ENCODE measurements at regions of chr7 and their contacts with region 1.

Region 1: DNA sequence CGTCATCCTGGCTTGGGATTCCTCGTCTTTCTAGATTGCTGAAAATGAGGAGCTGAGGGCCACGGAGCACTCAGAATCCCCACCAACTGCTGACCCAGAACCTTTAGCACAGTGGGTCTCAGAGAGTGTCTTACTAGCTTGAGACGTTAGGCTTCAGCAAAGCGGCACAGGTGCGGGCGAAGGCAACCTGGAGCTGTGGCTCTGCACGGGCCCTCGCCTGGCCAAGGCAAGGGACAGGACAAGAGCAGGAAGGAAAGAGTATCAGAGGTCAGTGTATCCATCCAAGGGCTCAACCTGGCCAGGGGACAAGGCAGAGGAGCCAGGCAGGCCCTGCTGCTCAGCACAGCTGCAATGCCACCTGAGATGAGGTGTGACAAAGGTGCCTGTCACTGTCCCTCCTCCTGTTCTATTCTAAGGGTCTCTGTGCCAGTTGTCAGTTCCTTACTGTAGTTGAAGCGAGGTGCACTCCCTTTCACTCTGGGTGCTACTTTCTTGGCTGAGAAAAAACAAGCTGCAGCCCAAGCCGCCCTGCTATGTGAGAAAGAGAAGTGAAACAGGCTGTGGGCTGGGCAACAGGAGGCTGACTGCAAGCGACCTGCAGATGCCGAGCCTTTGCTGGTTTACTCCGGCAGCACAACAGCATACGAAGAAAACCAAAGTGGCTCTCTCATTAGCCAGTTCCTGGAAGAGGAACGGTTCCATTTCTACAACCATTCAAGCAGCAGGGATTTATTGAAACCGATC is 33.3 kb upstream of the KDM7A start:
- DNase-seq: peak; percentile 72
- H3K4me3 Mint-ChIP-seq: peak overlapping the region; percentile 39
- H3K27ac Mint-ChIP-seq: peak overlapping the region; percentile 93
- H3K4me1 Mint-ChIP-seq: peaks cover 79% of the 10 kb centered on the region
- H3K27me3 Mint-ChIP-seq: no peaks in the 10 kb centered on the region

Region 2: GRCh38 chr7:139159900-139160675 is 1050.0 kb before region 1 on chr7:
- CTCF ChIA-PET with region 1: no interaction called
- POLR2A ChIA-PET with region 1: no interaction called
- DNase-seq: no peak
- H3K4me3 Mint-ChIP-seq: no peak overlapping the region
- H3K27ac Mint-ChIP-seq: no peak overlapping the region
- H3K4me1 Mint-ChIP-seq: no peaks in the 10 kb centered on the region
- H3K27me3 Mint-ChIP-seq: peaks cover 2% of the 10 kb centered on the region

Region 3: DNA sequence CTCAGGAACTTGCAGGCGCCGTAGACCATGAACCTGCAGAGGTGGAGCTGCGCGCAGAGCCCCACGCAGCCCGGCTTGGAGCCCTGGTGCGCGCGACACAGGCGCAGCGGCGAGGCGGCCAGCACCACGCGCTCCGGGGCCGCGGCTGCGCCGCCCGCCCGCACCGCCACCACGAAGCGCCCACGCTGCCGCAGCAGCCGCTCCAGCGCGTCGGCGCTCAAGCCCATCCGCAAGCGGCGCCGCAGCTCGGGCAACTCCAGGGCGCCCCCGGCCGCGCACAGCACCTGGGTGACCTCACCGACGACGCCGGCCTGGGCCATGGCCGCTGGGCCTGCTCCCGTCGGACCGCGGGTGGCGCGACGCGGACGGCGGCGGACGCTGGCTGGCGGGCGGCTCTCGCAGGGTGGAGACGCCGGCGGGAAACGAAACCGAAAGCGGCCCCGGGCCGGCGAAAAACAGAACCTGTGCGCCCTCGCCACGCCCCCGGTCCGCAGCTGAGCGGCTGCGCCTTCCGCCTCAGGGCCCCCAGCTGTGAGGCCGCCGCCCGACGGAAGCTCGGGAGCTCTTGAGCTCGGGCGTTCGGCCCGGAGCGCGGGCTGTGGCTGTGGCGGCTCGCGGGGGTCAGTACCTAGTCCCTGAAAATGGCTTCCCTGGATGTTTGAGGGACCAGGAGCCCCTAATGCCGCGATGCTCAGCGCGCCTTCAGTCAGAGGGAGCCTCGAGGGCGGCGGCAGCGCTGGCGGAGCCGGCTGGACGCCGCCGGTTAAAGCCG is 147.3 kb before region 1 on chr7 and contains the start of gene PARP12:
- CTCF ChIA-PET with region 1: no interaction called
- POLR2A ChIA-PET with region 1: no interaction called
- DNase-seq: peak; percentile 92
- H3K4me3 Mint-ChIP-seq: peak within 1 kb of the TSS; percentile 90
- H3K27ac Mint-ChIP-seq: peak within 1 kb of the TSS; percentile 92
- H3K4me1 Mint-ChIP-seq: peaks cover 48% of the 10 kb centered on the region
- H3K27me3 Mint-ChIP-seq: peaks cover 7% of the 10 kb centered on the region
- total RNA-seq, gene PARP12: 121 to 129 TPM

Region 4: DNA sequence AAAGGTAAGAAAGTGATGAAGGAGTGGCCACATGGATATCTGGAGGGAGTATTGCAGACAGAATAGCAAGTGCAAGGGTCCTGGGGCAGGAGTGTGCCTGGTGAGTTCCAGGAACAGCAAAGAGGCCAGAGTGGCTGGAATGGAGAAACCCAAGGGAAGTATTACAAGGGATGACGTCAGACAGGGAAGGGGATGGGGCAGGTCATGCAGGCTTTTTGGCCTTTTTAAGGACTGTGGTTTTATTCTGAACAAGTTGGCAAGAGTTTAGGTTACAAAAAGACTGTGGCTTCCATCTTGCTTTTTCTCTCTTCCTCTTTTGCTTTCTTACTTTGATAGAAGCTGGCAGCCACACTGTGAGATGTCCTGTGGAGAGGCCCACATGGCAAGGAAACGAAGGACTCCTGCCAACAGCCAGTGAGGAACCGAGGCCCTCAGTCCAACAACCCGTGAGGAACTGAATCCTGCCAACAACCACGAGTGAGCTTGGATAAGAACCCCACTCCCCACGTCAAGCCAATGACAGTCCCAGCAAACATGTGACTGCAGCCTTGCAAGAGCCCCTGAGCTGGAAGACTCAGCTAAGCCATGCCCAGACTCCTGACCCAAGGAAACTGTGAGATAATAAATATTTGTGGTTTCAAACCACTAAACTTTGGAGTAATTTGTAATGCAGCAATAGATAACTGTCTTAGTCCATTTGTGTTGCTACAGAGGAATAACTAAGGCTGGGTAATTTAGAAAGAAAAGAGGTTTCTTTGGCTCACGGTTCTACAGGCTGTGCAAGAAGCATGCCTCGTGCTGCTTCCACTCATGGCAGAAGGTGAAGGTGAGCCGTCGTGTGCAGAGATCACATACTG is 13.4 kb before region 1 on chr7:
- CTCF ChIA-PET with region 1: interaction called, 18 read pairs
- POLR2A ChIA-PET with region 1: no interaction called
- DNase-seq: no peak
- H3K4me3 Mint-ChIP-seq: no peak overlapping the region
- H3K27ac Mint-ChIP-seq: peak overlapping the region; percentile 32
- H3K4me1 Mint-ChIP-seq: peaks cover 11% of the 10 kb centered on the region
- H3K27me3 Mint-ChIP-seq: peaks cover 2% of the 10 kb centered on the region

Region 5: GRCh38 chr7:141654551-141654950 is 1444.5 kb after region 1 on chr7:
- CTCF ChIA-PET with region 1: no interaction called
- POLR2A ChIA-PET with region 1: no interaction called
- DNase-seq: peak; percentile 79
- H3K4me3 Mint-ChIP-seq: no peak overlapping the region
- H3K27ac Mint-ChIP-seq: peak overlapping the region; percentile 74
- H3K4me1 Mint-ChIP-seq: peaks cover 7% of the 10 kb centered on the region
- H3K27me3 Mint-ChIP-seq: no peaks in the 10 kb centered on the region